GM10248 (cell line): ENCODE measurements at regions of chr19 and their contacts with region 1.

Region 1: GRCh38 chr19:39314016-39314728 is 6.5 kb downstream of the LRFN1 start:
- DNase-seq: no peak
- CTCF ChIP-seq: no peak

Region 2: DNA sequence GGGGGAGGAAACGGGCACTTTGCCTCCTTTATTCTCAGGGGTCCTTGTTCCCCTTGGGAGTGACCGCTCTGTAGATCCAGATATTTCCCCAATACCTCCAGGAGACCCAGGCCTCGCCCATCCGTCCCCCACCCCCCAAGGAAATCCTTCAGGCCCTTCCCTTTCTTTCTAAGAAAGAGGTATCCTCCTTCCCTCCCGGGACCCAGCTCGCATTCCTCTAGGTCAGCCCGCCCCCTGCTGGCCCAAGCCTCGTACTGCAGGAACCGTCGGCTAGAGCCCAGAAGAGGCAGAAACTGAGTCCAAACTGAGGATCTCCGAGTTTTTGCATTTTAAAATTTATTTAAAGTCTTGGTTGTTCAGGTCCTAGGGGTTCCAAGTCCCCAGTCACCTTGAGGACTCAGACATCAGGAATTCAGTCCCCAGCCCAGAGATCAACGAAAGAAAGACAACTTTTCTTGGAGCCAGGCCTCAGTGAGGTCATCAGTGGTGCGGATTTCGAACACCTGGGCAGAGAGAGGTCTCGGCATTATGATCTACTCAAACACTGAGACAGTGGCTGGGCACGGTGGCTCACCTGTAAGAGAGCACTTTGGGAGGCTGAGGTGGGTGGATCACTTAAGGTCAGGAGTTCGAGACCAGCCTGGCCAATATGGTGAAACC is 14.0 kb after region 1 on chr19:
- CTCF ChIA-PET with region 1: interaction called, 35 read pairs
- POLR2A ChIA-PET with region 1: no interaction called
- DNase-seq: peak; percentile 81
- CTCF ChIP-seq: peak; percentile 96